ENCODE measurements at regions of chr10 and their contacts with region 1.

Region 1: GRCh38 chr10:69957886-69958555 is 94.6 kb upstream of the MACROH2A2 start:
- DNase-seq: peak; percentile 79
- H3K4me3 ChIP-seq: no peak overlapping the region
- H3K27ac ChIP-seq: peak overlapping the region; percentile 76
- H3K4me1 ChIP-seq: peaks cover 39% of the 10 kb centered on the region
- H3K27me3 ChIP-seq: no peaks in the 10 kb centered on the region
- CTCF ChIP-seq: peak; percentile 88

Region 2: DNA sequence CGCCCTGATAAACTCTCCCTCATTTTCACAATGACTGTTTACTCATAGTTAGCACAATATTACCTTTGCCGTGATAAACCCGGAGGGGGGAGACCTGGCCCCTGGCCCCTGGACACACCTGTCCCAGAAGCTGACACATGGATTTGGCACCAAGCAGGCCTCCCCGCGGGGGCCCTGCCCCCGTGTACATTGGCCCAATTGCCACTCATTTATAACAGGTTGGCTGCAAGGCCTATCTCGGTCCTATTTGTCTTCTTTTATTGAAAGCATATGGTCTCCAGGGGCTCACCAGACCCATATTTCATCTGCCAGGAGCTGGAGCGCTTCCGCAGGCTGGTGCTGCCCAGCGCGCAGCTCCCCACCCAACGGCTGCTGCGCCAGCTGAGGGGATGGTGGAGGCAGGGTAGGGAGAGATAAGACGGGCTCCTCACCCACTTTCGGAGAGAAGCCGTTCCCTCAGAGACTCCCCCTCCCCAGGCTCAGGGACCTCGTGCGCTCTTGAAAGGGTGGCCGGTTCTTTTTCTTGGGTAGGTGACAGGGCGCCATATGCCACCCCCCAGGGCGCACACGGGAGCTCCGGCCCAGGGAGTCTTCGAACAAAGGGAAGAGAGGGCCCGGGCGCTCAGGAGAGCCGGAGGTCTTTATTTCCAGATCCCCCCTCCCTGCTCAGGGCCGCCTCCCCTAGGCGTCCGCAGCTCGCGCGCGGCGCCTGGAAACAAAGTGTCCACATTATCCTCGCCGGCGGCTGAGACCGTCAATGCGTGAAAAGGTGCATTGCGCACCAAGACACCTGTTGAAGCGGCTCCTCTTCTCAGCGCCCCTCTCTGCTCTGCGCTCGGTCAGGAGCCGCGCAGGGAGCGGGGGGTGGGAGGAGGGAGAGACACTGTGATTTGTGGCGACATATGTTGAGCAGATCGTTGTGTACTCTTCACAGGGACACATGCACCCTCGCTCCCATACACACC is 380.5 kb before region 1 on chr10:
- CTCF ChIA-PET with region 1: no interaction called
- POLR2A ChIA-PET with region 1: no interaction called
- intact Hi-C with region 1: no loop called
- DNase-seq: no peak
- H3K4me3 ChIP-seq: no peak overlapping the region
- H3K27ac ChIP-seq: no peak overlapping the region
- H3K4me1 ChIP-seq: no peaks in the 10 kb centered on the region
- H3K27me3 ChIP-seq: peaks cover 94% of the 10 kb centered on the region
- CTCF ChIP-seq: no peak

Region 3: DNA sequence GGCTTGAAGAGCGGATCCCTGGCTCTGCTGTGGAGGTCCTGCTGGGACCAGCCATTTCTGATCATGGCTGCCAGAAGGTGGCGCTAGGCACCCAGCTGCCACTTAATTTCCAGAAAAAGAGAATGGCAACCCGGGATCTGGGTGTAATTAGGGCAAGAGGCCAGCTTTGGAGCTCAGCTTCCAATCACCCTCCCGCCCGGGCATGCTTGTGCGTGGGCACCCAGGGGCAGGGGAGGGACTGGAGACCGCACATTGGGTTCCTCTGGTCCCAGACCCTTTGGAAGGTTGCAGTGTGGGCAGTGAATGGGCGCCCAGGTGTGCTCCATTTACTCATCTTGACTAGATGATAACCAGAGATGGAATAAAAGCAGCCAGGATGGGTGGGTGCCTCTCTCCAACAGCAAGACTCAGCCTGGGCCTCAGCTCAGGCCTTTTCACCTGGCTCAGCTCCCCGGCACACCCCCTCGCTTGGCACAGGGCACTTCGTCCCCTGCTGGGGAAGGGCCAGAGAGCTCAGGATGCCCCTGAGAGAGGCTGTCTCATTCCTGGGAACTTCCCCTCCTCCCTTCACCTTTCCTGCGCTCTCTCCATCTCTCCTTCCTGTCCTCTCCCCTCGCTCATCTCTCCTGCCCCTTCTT is 313.2 kb before region 1 on chr10:
- CTCF ChIA-PET with region 1: no interaction called
- POLR2A ChIA-PET with region 1: no interaction called
- intact Hi-C with region 1: no loop called
- DNase-seq: peak; percentile 77
- H3K4me3 ChIP-seq: no peak overlapping the region
- H3K27ac ChIP-seq: no peak overlapping the region
- H3K4me1 ChIP-seq: no peaks in the 10 kb centered on the region
- H3K27me3 ChIP-seq: no peaks in the 10 kb centered on the region
- CTCF ChIP-seq: peak; percentile 91

Region 4: DNA sequence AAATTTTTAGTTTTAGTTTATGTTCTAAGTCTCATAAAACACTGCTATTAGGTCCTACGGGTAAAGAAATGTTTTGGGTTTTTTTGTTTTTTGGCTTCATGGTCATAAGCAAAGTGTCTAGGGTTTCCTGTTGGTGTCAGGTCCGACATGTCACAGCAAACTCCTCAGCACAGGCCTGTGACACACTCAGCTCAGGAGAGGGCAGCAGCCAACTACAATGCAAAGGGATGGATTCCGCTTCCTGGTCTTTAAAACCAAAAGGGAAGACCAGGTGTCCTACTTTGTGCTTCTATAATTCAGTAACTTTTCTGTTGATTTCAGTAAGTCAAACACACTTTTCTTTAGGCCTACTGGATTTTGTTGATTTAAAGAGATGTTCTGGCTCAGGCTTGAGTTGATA is 10.8 kb after region 1 on chr10:
- CTCF ChIA-PET with region 1: interaction called, 4 read pairs
- POLR2A ChIA-PET with region 1: interaction called, 20 read pairs
- intact Hi-C with region 1: no loop called
- DNase-seq: peak; percentile 81
- H3K4me3 ChIP-seq: no peak overlapping the region
- H3K27ac ChIP-seq: peak overlapping the region; percentile 65
- H3K4me1 ChIP-seq: peaks cover 46% of the 10 kb centered on the region
- H3K27me3 ChIP-seq: no peaks in the 10 kb centered on the region
- CTCF ChIP-seq: peak; percentile 75

Region 5: GRCh38 chr10:70815504-70816219 is 857.6 kb after region 1 on chr10 and contains the start of gene SGPL1:
- CTCF ChIA-PET with region 1: no interaction called
- POLR2A ChIA-PET with region 1: no interaction called
- intact Hi-C with region 1: no loop called
- DNase-seq: peak; percentile 88
- H3K4me3 ChIP-seq: peak within 1 kb of the TSS; percentile 90
- H3K27ac ChIP-seq: peak within 1 kb of the TSS; percentile 78
- H3K4me1 ChIP-seq: peaks cover 4% of the 10 kb centered on the region
- H3K27me3 ChIP-seq: no peaks in the 10 kb centered on the region
- CTCF ChIP-seq: peak; percentile 81
- total RNA-seq, gene SGPL1: 48.6 and 65.5 TPM in 2 replicates

Measured in A673 (cell line).